ENCODE measurements at regions of chr20 and their contacts with region 1.

Region 1: GRCh38 chr20:31723319-31724078 is 831 bp upstream of the BCL2L1 start:
- DNase-seq: peak; percentile 94 to 99 (median 97)
- ATAC-seq: peak; percentile 91 to 94 (median 93)
- H3K4me3 ChIP-seq: peak overlapping the region; percentile 83 to 96
- H3K4me3 Mint-ChIP-seq: peak overlapping the region; percentile 92 to 96 (median 92)
- H3K27ac ChIP-seq: peak overlapping the region; percentile 82
- H3K27ac Mint-ChIP-seq: peak overlapping the region; percentile 95 to 96
- H3K4me1 ChIP-seq: peaks cover 29 to 39% of the 10 kb centered on the region in 2 experiments
- H3K4me1 Mint-ChIP-seq: peaks cover 38 to 41% (median 39%) of the 10 kb centered on the region in 3 donors
- H3K27me3 ChIP-seq: no peaks in the 10 kb centered on the region
- H3K27me3 Mint-ChIP-seq: no peaks in the 10 kb centered on the region

Region 2: GRCh38 chr20:31630187-31630790 is 93.2 kb before region 1 on chr20:
- CTCF ChIA-PET with region 1: interaction called in 1 of 2 experiments, 20 read pairs
- POLR2A ChIA-PET with region 1: no interaction called
- DNase-seq: no peak
- ATAC-seq: no peak
- H3K4me3 ChIP-seq: no peak overlapping the region
- H3K4me3 Mint-ChIP-seq: no peak overlapping the region
- H3K27ac ChIP-seq: no peak overlapping the region
- H3K27ac Mint-ChIP-seq: no peak overlapping the region
- H3K4me1 ChIP-seq: peaks cover 0 to 4% of the 10 kb centered on the region in 2 experiments
- H3K4me1 Mint-ChIP-seq: no peaks in the 10 kb centered on the region
- H3K27me3 ChIP-seq: peaks cover 0 to 2% of the 10 kb centered on the region in 2 experiments
- H3K27me3 Mint-ChIP-seq: no peaks in the 10 kb centered on the region

Region 3: GRCh38 chr20:31674895-31675827 is 48.3 kb before region 1 on chr20:
- CTCF ChIA-PET with region 1: interaction called, 6 to 42 read pairs
- POLR2A ChIA-PET with region 1: no interaction called
- DNase-seq: peak; percentile 24 to 84 (median 58)
- ATAC-seq: peak; percentile 67 to 80 (median 72)
- H3K4me3 ChIP-seq: peak overlapping the region; percentile 61 to 79
- H3K4me3 Mint-ChIP-seq: peak overlapping the region; percentile 96 to 99 (median 96)
- H3K27ac ChIP-seq: peak overlapping the region; percentile 89
- H3K27ac Mint-ChIP-seq: peak overlapping the region; percentile 96 to 99
- H3K4me1 ChIP-seq: peaks cover 43 to 86% of the 10 kb centered on the region in 2 experiments
- H3K4me1 Mint-ChIP-seq: peaks cover 67 to 77% (median 72%) of the 10 kb centered on the region in 3 donors
- H3K27me3 ChIP-seq: no peaks in the 10 kb centered on the region
- H3K27me3 Mint-ChIP-seq: no peaks in the 10 kb centered on the region

Region 4: DNA sequence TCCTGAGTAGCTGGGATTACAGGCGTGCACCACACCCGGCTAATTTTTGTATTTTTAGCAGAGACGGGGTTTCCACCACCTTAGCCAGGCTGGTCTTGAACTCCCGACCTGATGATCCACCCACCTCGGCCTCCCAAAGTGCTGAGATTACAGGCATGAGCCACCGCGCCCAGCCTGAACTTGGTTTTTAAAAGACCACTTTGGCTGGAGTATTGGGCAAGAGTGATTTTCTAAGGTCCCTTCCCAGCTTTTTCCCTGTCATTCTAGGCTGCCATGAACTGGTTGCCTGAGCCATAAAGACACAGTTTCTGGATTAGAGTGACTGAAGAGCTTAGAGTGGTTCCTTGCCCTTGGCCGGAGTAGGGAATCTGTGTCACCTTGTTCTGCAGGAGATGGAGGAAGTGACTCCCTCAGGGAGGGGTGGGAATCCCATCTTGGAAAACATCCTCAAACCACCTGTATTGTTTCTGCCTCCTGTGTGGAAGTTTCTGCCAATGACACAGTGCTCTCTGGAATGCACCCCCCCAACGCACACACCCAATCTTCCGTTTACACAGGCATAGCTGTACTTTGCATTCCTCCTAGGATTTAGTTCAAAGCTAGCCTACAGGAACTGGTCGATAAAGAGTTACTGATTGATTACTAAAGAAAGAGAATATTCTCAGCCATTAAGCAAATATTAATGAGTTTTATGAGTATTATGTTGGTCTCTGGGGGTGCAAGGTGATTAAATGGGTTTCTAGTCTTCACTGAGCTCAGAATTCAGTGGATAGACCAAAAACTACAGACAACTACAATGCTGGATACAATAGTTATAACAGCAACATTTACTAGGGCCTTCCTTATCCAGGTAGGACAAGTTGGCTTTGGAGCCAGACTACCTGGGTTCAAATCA is 19.0 kb before region 1 on chr20:
- CTCF ChIA-PET with region 1: interaction called, 4 to 10 read pairs
- POLR2A ChIA-PET with region 1: interaction called in 1 of 2 experiments, 4 read pairs
- DNase-seq: no peak
- ATAC-seq: no peak
- H3K4me3 ChIP-seq: no peak overlapping the region
- H3K4me3 Mint-ChIP-seq: no peak overlapping the region
- H3K27ac ChIP-seq: no peak overlapping the region
- H3K27ac Mint-ChIP-seq: peak overlapping the region; percentile 0 to 44
- H3K4me1 ChIP-seq: peaks cover 0 to 29% of the 10 kb centered on the region in 2 experiments
- H3K4me1 Mint-ChIP-seq: peaks cover 58 to 69% (median 63%) of the 10 kb centered on the region in 3 donors
- H3K27me3 ChIP-seq: no peaks in the 10 kb centered on the region
- H3K27me3 Mint-ChIP-seq: no peaks in the 10 kb centered on the region

Region 5: DNA sequence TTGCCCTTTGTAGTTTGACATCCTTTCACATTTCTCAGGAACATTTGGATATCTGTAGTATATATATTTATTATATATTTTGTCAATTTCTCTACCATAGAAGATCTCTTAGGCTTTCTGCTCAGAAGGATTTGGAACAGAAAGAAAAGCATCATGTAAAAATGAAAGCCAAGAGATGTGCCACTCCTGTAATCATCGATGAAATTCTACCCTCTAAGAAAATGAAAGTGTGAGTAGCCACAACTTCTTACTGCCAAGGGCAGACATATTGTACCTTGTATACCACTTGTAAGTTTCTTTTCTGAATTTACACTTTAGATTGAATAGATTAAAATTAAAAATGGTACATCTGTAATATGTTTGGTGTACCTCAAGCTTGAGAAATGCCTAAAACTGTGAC is 46.7 kb after region 1 on chr20:
- CTCF ChIA-PET with region 1: no interaction called
- POLR2A ChIA-PET with region 1: no interaction called
- DNase-seq: peak in 1 of 35 experiments; percentile 12
- ATAC-seq: no peak
- H3K4me3 ChIP-seq: no peak overlapping the region
- H3K4me3 Mint-ChIP-seq: peak overlapping the region in 1 of 3 donors; percentile 39
- H3K27ac ChIP-seq: no peak overlapping the region
- H3K27ac Mint-ChIP-seq: no peak overlapping the region
- H3K4me1 ChIP-seq: no peaks in the 10 kb centered on the region
- H3K4me1 Mint-ChIP-seq: peaks cover 0 to 11% (median 7%) of the 10 kb centered on the region in 3 donors
- H3K27me3 ChIP-seq: no peaks in the 10 kb centered on the region
- H3K27me3 Mint-ChIP-seq: no peaks in the 10 kb centered on the region

Measured in T-cell (primary cell).